ENCODE measurements at regions of chr1 and their contacts with region 1.

Region 1: DNA sequence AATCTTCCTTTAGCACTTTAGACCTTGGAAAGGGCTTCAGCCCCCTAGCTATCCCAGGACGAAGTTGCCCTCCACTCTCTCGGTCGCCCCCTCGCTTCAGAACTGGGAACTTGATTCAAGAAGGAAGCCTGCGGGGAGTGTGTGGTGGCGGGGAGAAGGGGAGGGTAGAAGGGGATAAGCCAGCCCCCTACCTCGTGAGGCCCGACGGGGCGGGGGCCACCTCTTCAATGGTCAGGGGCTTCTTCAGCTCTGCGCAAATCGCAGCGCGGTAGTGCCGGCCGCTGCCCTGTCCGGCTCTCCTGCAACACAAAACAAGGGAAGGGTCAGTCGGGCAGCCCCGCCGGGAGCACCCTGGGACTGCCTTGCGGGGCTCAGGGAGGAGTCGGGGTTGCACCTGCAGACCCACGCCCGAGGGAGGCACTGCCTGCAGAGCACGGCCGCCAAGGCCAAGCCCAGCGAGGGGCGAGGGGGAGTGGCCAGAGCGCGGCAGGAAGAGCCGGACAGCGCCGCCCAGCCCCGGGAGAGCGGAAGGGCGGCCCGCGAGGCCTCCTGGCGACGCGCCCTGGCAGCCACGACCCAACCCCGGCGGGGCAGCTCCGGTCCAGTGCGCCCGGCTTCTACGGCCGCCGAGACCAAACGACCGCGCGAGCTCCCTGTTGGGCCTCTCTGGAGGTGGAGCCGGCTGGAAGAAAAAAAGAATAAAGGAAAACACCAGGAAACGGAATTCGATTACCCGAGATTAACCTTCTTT is 56.2 kb upstream of the RASAL2 start:
- DNase-seq: peak in 9 of 10 donors; percentile 15 to 81 (median 62)
- H3K4me3 ChIP-seq: peak overlapping the region; percentile 54 to 86 (median 70)
- H3K27ac ChIP-seq: peak overlapping the region in 57 of 59 donors; percentile 19 to 93 (median 79)
- H3K27me3 ChIP-seq: no peaks in the 10 kb centered on the region
- CTCF ChIP-seq: peak in 51 of 56 donors; percentile 7 to 69 (median 48)

Region 2: GRCh38 chr1:178093205-178093957 is 55.7 kb after region 1 on chr1:
- intact Hi-C with region 1: loop called (anchors 5 to 10 kb)
- DNase-seq: peak; percentile 79 to 95 (median 92)
- H3K4me3 ChIP-seq: peak overlapping the region; percentile 58 to 97 (median 88)
- H3K27ac ChIP-seq: peak overlapping the region; percentile 36 to 96 (median 90)
- H3K27me3 ChIP-seq: no peaks in the 10 kb centered on the region
- CTCF ChIP-seq: peak in 32 of 56 donors; percentile 3 to 49 (median 20)